Cardiac septum (tissue), 1 donor: ENCODE measurements at regions of chr10 and their contacts with region 1.

Region 1: GRCh38 chr10:103888113-103888841 is 29.7 kb downstream of the STN1 start:
- DNase-seq: peak; percentile 83

Region 2: DNA sequence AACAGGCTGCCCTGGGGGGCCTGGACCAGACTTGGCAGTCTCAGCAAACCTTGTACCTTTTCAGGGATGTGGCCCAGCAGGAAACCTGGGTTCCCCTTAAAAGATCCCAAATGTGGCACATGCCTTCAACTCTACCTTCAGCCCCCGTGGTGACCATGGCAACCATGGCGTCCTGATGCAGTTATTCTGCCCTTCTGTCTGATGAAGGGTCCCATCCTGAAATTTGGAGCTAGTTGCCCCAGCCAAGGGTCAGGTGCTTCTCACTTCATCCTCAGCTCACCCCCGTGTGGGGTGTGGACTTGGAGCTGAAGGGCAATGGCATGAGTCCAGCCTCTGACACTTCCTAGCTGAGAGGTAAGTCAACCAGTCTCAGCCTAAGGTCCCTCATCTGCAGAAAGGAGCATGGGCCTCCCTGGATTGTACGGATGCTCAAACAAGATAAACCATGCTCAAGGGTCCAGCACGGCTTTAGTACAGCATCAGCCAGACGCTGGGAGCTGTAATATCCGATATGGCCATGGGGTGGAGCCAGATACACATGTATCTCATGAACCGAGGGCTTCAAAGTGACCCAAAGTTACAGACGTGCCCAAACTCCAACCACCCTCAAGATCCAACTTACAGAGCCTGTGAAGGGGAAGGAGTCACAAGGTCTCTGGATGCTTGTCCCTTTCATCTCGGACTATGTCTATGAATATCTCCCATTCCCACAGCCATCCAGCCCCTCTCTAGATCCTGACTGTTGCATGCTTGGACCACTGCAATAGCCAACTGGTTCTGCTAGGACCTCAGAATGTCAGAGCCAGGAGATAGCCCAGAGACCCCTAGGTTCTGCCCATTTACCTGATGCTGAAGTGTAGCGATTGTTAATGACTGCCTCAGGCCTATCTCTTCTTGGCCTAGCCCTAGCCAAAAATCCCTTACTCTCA is 175.4 kb before region 1 on chr10:
- intact Hi-C with region 1: loop called (anchors 1 kb)
- DNase-seq: no peak

Region 3: DNA sequence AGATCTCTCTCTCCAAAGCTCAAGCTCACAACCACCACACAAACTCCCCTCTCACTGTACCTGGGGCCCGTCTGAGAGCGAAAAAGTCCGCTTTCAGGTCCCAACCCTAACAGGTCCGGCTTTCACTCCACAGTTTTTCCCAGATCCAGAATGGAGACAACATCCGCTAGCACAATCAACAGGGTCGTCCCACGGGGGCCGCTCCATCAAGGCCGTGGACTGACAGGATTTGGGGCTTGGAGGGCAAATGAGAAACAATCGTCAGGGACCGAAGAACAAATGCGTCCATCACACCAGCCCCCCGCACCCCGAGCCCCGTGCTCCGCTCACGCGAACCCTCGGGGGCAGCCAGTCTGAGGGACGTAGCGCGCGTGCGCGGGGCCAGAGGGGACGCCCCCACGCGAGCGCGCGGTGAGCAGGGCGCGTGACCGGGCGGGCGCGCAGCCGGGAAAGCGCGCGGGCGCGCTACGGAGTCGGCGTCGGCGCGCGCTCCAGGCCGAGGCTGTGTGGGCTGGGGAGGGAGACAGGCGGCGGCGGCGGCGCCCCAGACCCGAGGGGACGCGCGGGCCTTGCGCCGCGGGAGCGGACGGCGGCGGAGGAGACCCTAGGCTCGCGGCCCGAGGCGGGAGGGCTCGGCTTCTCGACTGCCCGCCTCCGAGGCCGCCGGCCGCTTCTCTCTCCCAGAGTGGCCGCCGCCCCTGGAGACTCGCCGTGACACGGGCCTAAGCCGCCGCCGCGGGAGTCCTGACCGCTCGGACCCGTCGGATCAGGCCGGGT is 78.6 kb after region 1 on chr10 and contains the start of gene SLK:
- intact Hi-C with region 1: loop called (anchors 5 kb)
- DNase-seq: peak; percentile 94
- total RNA-seq, gene SLK: 59.7 TPM

Region 4: DNA sequence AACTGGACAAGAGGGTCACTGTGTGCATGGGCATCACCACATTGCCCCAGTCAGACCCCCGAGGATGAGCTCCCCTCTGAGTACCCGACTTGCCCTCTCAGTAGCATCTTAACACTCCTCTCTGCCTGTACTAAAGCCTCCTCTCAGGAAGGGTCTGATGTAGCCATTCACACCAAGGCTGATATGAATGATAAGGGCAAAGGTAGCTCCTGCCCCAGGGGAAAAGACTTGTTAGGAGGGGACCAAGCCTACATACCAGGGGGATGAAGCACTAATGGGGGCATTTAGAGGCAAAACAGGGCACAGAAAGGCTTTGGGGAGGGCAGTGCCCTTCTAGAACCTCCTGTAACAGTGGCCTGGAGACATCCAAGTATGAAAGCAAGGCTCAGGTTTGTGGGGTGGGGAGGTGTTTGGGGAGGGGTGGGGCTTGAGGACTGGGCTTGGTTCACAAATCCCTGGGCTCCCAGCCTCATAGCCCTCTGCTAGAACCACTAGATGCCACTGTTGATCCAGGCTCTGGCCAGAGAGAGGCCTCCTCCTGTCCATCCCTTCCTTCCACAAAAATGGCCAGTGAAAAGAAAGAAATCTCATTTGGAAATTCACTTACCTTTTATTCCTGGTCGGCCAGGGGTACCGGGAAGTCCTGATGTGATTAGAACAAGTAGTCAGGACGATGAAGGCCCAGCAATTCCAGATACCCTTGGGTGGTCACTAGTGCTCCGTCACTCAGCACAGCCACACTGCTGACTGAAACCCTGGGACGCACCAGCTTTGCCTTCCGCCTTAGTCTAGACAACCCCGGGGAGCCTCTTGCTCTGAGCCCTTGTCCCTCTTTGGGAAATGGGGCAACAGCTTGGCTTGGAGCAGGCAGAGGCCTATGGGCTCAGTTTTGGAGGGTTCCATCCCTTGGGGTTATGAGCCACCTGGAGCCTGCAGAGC is 157.1 kb after region 1 on chr10:
- intact Hi-C with region 1: loop called (anchors 5 kb)
- DNase-seq: no peak

Region 5: DNA sequence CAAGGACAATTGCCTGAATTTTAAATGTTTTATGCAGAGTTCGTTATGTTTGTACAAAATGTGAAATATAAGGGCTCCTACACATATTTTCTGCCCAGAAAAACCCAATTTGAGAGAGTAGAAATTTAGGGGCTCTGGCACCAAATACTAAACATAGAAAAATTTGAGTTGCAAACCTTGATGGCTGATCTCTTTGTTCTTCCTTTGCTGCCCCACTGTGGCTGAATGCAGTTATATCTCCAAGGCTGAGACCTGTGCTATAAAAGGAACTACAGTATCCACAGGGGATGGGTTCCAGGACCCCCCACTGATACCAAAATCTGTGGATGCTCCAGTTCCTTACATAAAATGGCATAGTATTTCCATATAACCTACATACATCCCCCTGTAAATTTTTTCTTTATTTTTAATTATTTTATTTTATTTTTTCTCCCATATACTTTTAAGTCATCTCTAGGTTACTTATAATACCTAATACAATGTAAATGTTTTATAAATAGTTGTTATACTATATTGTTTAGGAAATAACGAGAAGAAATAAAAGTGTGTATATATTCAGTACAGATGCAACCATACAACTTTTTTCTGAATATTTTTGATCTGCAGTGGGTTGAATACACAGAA is 321.4 kb after region 1 on chr10:
- intact Hi-C with region 1: loop called (anchors 2 kb)
- DNase-seq: no peak